IMR-90 (cell line): ENCODE measurements at regions of chr6 and their contacts with region 1.

Region 1: DNA sequence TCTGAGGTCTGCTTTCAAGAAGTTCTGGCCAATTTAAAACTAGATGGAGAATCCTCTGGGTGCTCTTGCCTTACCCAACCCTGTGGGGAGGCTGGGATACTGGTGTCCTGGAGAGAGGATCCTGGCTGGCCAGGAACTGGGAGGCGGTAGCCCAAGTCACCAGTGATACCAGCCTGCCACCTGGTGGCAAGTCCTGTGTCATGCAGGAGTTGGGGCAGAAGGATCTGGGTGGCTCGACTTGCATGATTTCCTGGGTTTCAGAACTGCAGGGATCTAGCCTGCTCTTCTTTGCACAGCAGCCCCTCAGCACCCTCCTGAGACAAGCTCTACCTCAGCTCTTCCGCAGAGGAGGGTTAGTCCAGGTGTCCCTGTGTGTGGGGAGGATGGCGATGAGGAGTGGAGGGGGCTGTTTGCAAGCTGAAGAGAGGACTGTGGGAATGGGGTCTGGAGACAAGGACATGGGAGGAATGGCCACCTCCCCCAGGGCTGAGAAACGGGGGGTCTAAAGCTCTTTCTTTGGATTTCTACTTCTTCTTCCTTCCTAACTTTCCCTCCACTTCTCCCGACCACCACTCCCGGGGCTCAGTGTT is 4.2 kb downstream of the KCNK17 start:
- DNase-seq: peak; percentile 62
- ATAC-seq: peak; percentile 98
- H3K4me3 ChIP-seq: no peak overlapping the region
- H3K27ac ChIP-seq: no peak overlapping the region
- H3K4me1 ChIP-seq: no peaks in the 10 kb centered on the region
- H3K27me3 ChIP-seq: peaks cover 29% of the 10 kb centered on the region; the same call in 1 of the 2 replicates
- CTCF ChIP-seq: peak; percentile 83
- POLR2A ChIP-seq: no peak
- RAD21 ChIP-seq: peak; percentile 87

Region 2: DNA sequence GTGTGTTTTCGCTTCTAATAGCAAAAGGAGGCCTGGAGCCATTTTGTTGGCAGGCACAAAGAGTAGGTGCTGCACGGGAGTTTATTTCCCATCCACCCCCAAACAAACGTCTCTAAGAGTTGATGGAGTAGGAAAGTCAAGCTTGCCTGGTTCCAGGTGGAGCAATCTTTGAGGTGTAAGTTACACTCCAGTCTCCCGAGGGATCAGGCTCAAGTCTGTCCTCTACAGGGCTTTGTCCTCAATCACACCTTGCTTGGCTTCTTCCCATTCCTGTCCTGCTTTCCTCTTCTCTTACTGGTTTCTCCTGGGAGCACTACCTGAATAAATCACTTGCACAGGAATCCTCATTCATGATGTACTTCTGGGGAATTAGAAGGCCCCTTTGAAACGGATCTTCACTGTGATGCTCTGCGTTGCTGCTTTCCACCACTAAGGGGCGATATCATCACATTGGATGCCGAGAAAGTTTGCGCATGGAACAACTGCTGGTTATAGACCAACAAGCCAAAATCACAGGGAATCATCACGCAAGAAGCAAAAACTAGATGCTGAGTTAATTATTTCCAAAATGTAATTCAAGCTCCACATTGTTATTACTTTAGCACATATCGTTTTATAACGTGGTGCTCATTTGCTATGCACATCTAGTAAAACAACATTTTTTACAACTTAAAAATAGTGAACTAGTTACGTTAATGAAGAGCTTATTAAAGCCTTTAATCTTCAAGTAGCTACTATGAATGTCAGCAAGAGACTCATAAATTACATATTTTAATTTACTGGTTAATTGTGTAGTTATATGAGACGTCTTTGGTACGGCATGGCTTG is 438.1 kb before region 1 on chr6:
- CTCF ChIA-PET with region 1: interaction called, 8 read pairs
- POLR2A ChIA-PET with region 1: no interaction called
- dilution Hi-C with region 1: no loop called
- in situ Hi-C with region 1: loop called (anchors 5 kb)
- intact Hi-C with region 1: loop called (anchors 1 kb)
- DNase-seq: peak; percentile 36
- ATAC-seq: peak; percentile 92
- H3K4me3 ChIP-seq: no peak overlapping the region
- H3K27ac ChIP-seq: no peak overlapping the region
- H3K4me1 ChIP-seq: no peaks in the 10 kb centered on the region
- H3K27me3 ChIP-seq: 0 out of 2 replicates have a peak, but pooled peaks cover 1% of the 10 kb centered on the region
- CTCF ChIP-seq: peak; percentile 80
- POLR2A ChIP-seq: no peak
- RAD21 ChIP-seq: peak; percentile 79

Region 3: GRCh38 chr6:38973178-38974054 is 336.6 kb before region 1 on chr6:
- CTCF ChIA-PET with region 1: interaction called, 6 read pairs
- POLR2A ChIA-PET with region 1: no interaction called
- dilution Hi-C with region 1: no loop called
- in situ Hi-C with region 1: loop called (anchors 10 kb)
- intact Hi-C with region 1: loop called (anchors 1 kb)
- DNase-seq: peak; percentile 79
- ATAC-seq: peak; percentile 86
- H3K4me3 ChIP-seq: no peak overlapping the region
- H3K27ac ChIP-seq: no peak overlapping the region
- H3K4me1 ChIP-seq: no peaks in the 10 kb centered on the region
- H3K27me3 ChIP-seq: no peaks in the 10 kb centered on the region
- CTCF ChIP-seq: peak; percentile 59
- POLR2A ChIP-seq: no peak
- RAD21 ChIP-seq: peak; percentile 58

Region 4: GRCh38 chr6:39088331-39088730 is 221.7 kb before region 1 on chr6:
- CTCF ChIA-PET with region 1: no interaction called
- POLR2A ChIA-PET with region 1: no interaction called
- dilution Hi-C with region 1: no loop called
- in situ Hi-C with region 1: no loop called
- intact Hi-C with region 1: loop called (anchors 1 kb)
- DNase-seq: peak; percentile 68
- ATAC-seq: peak; percentile 99
- H3K4me3 ChIP-seq: no peak overlapping the region
- H3K27ac ChIP-seq: no peak overlapping the region
- H3K4me1 ChIP-seq: no peaks in the 10 kb centered on the region
- H3K27me3 ChIP-seq: peaks cover 6% of the 10 kb centered on the region; the same call in 1 of the 2 replicates
- CTCF ChIP-seq: peak; percentile 48
- POLR2A ChIP-seq: no peak
- RAD21 ChIP-seq: peak; percentile 48

Region 5: GRCh38 chr6:39166189-39166911 is 143.7 kb before region 1 on chr6:
- CTCF ChIA-PET with region 1: no interaction called
- POLR2A ChIA-PET with region 1: no interaction called
- dilution Hi-C with region 1: no loop called
- in situ Hi-C with region 1: loop called (anchors 5 kb)
- intact Hi-C with region 1: loop called (anchors 1 kb)
- DNase-seq: peak; percentile 37
- ATAC-seq: peak; percentile 91
- H3K4me3 ChIP-seq: no peak overlapping the region
- H3K27ac ChIP-seq: no peak overlapping the region
- H3K4me1 ChIP-seq: no peaks in the 10 kb centered on the region
- H3K27me3 ChIP-seq: no peaks in the 10 kb centered on the region; the same call in 1 of the 2 replicates
- CTCF ChIP-seq: peak; percentile 65
- POLR2A ChIP-seq: no peak
- RAD21 ChIP-seq: peak; percentile 69